ENCODE measurements at regions of chr2 and their contacts with region 1.

Region 1: DNA sequence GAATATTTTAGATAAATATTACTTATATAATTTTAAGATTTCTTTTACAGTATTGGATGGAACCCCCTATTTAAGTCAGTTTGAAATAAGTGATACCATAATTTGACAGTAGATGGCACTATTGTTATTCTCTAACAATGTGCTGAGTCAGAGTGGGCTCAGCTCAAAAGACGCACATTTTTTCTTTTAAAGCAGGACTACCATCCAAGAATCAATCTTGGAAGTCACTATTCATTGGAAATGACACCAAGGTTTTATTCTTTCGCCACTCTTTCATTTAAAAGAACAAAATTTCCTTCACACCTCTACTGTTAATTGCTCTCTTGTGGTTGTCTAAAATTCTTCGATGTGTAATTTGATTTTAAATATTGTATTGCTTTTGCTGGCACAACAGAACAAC is 32.6 kb upstream of the SPAG16 start:
- DNase-seq: no peak
- H3K4me3 Mint-ChIP-seq: no peak overlapping the region
- H3K27ac Mint-ChIP-seq: peak overlapping the region; percentile 40
- H3K4me1 Mint-ChIP-seq: peaks cover 16% of the 10 kb centered on the region
- H3K27me3 Mint-ChIP-seq: no peaks in the 10 kb centered on the region
- CTCF ChIP-seq: peak; percentile 62

Region 2: GRCh38 chr2:212998626-212999359 is 252.8 kb before region 1 on chr2:
- CTCF ChIA-PET with region 1: no interaction called
- intact Hi-C with region 1: no loop called
- DNase-seq: no peak
- H3K4me3 Mint-ChIP-seq: no peak overlapping the region
- H3K27ac Mint-ChIP-seq: no peak overlapping the region
- H3K4me1 Mint-ChIP-seq: peaks cover 7% of the 10 kb centered on the region
- H3K27me3 Mint-ChIP-seq: no peaks in the 10 kb centered on the region
- CTCF ChIP-seq: no peak

Region 3: GRCh38 chr2:213232649-213233437 is 18.8 kb before region 1 on chr2:
- CTCF ChIA-PET with region 1: no interaction called
- intact Hi-C with region 1: no loop called
- DNase-seq: no peak
- H3K4me3 Mint-ChIP-seq: no peak overlapping the region
- H3K27ac Mint-ChIP-seq: no peak overlapping the region
- H3K4me1 Mint-ChIP-seq: peaks cover 23% of the 10 kb centered on the region
- H3K27me3 Mint-ChIP-seq: no peaks in the 10 kb centered on the region
- CTCF ChIP-seq: no peak

Region 4: DNA sequence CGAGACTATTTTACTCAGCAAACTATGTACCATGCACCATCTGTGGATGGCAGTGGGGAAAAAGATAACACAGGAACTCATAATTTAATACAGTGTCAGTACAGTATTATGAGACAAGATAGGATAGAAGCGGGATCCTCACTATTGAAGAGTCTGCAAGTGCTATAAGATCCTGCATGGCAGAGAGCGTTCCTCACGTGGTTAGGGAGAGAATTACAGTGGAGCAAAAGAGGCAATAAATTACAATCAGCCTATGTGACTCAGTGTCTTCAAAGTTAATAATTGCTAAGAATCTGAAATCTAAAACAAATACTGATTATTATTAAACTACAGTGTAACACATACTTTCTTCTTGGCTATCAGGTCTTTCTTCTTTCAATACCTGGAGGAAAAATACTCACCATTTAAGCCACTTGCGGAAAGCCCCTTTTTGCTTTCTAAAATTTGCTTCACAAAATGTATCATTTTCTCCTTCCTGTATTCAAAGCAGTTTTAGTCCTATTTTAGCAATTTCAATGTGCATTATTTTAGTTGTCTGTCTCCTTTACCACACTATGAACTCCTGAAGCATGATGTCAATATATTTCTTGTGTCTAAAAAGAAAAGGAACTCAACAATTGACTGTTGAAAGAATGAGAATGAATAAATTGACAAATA is 375.6 kb after region 1 on chr2:
- CTCF ChIA-PET with region 1: no interaction called
- intact Hi-C with region 1: loop called (anchors 10 kb)
- DNase-seq: peak; percentile 21
- H3K4me3 Mint-ChIP-seq: peak overlapping the region; percentile 7
- H3K27ac Mint-ChIP-seq: peak overlapping the region; percentile 49
- H3K4me1 Mint-ChIP-seq: peaks cover 17% of the 10 kb centered on the region
- H3K27me3 Mint-ChIP-seq: no peaks in the 10 kb centered on the region
- CTCF ChIP-seq: peak; percentile 38

Region 5: DNA sequence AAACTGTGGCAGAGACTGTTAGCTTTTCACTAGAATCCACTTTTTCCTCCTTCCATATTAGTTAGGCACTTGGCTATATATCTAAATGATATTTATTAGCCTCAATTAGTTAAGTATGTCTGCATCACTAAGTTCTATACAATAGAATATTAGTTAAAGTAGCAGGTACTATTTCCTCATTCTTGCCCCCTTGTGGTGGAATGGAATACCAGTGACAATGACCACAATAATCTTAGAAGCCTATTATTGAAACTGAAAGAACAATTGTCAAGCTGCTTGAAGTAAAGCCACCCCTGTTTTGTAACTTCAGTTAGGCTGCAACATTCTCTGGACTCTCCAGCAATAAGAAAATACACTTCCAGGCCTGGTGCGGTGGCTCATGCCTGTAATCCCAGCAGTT is 682.9 kb after region 1 on chr2:
- CTCF ChIA-PET with region 1: no interaction called
- intact Hi-C with region 1: loop called (anchors 5 kb)
- DNase-seq: peak; percentile 23
- H3K4me3 Mint-ChIP-seq: no peak overlapping the region
- H3K27ac Mint-ChIP-seq: no peak overlapping the region
- H3K4me1 Mint-ChIP-seq: no peaks in the 10 kb centered on the region
- H3K27me3 Mint-ChIP-seq: no peaks in the 10 kb centered on the region
- CTCF ChIP-seq: peak; percentile 34

Region 6: DNA sequence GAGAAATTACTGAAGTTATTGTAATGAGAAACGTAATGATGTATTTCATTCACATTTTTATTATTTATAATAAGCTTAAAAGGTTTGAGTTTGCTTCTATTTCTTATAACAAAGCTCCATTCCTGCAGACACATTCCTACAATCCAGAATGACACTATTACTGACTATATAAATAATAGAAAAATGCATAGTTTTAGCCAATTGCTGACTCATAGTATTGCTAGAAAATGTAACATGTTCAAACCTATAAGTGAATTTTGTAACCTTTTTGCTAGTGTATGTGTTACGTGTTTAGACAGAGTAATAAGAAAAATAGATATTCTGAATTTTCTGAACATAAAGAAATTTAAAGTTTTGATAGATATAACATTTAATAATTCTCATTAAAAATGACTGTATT is 1150.0 kb after region 1 on chr2:
- CTCF ChIA-PET with region 1: no interaction called
- intact Hi-C with region 1: loop called (anchors 10 kb)
- DNase-seq: no peak
- H3K4me3 Mint-ChIP-seq: no peak overlapping the region
- H3K27ac Mint-ChIP-seq: no peak overlapping the region
- H3K4me1 Mint-ChIP-seq: no peaks in the 10 kb centered on the region
- H3K27me3 Mint-ChIP-seq: no peaks in the 10 kb centered on the region
- CTCF ChIP-seq: no peak

Region 7: DNA sequence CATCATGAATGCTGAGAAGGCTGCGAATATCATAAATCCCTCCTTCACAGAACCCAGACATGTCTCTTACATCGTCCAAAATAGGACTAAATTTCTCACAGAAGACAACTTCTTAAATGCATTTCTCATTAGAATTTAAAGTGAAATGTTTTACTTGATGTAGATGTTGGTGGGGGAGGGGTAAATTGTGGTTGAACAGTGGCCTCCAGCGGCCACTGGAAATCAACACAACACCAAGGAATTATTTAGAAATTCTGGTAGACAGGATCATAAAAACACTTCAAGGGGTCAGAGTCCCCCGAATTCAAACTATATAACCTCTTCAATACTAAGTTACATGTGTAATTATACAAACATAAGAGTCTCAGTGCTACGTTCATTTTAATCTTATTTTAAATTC is 1750.9 kb after region 1 on chr2:
- CTCF ChIA-PET with region 1: no interaction called
- intact Hi-C with region 1: loop called (anchors 10 kb)
- DNase-seq: peak; percentile 22
- H3K4me3 Mint-ChIP-seq: no peak overlapping the region
- H3K27ac Mint-ChIP-seq: no peak overlapping the region
- H3K4me1 Mint-ChIP-seq: no peaks in the 10 kb centered on the region
- H3K27me3 Mint-ChIP-seq: no peaks in the 10 kb centered on the region
- CTCF ChIP-seq: peak; percentile 33

Measured in Calu3 (cell line).